SK-N-SH (cell line): ENCODE measurements at regions of chr20 and their contacts with region 1.

Region 1: DNA sequence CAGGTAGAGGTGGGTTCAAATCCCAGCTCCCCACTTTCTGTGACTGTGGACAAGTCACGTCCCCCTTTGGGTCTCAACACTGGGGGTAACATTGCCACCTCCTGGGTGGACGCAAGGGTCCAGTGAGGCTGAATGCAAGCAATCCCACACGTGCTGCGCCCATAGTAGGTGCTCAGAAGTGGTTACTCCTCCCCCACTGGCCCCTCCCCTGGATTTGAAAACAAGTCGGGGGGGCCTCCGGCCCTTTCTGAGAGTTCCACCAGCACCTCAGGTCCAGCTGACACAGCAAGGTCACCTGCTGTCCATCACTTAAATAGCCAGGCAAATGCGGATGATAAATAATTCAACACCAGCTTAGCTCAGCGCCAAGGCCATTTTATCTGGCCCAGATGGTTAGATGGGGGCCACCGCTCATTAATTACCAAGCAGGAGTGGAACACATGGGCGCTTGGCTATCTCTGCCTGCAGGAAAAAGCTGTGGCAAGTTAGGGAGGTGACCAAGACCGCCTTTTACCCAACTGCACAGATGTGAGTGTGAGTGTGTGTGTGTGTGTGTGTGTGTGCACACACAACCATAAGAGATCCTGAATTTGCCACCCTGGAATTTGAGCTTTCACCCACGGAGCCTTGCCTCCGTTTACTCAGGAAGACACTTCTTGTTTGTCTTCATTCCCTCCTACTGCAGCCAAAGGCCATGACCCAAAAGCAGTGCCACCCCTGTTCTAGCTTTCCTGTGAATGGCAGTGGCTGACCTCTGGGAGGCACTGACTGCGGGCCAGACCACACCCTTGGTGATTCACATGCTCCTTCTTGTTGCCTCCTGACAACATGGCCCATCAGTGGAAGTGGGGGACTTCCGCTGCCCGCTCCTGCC is 34.7 kb upstream of the KCNB1 start:
- DNase-seq: no peak
- H3K4me3 ChIP-seq: no peak overlapping the region
- H3K27ac ChIP-seq: no peak overlapping the region
- H3K4me1 ChIP-seq: no peaks in the 10 kb centered on the region
- H3K27me3 ChIP-seq: no peaks in the 10 kb centered on the region
- CTCF ChIP-seq: no peak
- EP300 ChIP-seq: no peak
- RAD21 ChIP-seq: no peak

Region 2: GRCh38 chr20:49490702-49491110 is 26.4 kb before region 1 on chr20:
- CTCF ChIA-PET with region 1: no interaction called
- POLR2A ChIA-PET with region 1: no interaction called
- DNase-seq: no peak
- H3K4me3 ChIP-seq: no peak overlapping the region
- H3K27ac ChIP-seq: no peak overlapping the region
- H3K4me1 ChIP-seq: no peaks in the 10 kb centered on the region
- H3K27me3 ChIP-seq: peaks cover 26% of the 10 kb centered on the region; the same call in 1 of the 2 replicates
- CTCF ChIP-seq: no peak
- EP300 ChIP-seq: no peak
- RAD21 ChIP-seq: no peak

Region 3: DNA sequence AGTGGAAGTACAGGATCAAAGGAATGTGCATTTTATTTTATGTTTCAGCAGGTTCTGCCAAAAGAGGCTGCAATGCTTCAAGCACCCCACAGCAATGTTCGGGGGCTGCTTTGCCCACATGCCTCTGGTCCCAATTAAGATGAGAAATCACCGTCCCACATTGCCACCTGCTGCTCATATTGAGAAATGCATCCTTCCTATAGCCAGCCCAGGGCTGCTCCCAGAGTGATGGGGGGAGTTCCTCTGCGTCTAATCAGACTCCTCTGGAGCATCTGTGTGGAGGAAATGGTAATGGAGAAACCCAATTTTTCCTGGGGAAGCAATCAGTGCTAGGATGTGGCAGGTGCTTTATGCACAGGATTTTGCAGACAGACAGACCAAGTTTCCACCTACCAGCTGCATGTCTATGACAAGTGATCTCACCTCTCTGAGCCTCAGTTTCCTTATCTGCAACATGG is 17.1 kb after region 1 on chr20:
- CTCF ChIA-PET with region 1: interaction called, 78 read pairs
- POLR2A ChIA-PET with region 1: no interaction called
- DNase-seq: peak; percentile 79
- H3K4me3 ChIP-seq: no peak overlapping the region
- H3K27ac ChIP-seq: no peak overlapping the region
- H3K4me1 ChIP-seq: peaks cover 0 to 5% of the 10 kb centered on the region in 2 experiments; a peak in 1 of 4 replicates
- H3K27me3 ChIP-seq: no peaks in the 10 kb centered on the region
- CTCF ChIP-seq: peak; percentile 80
- EP300 ChIP-seq: no peak; a peak in 1 of 4 replicates
- RAD21 ChIP-seq: peak; percentile 85